B cell (primary cell): ENCODE measurements at regions of chr9 and their contacts with region 1.

Region 1: DNA sequence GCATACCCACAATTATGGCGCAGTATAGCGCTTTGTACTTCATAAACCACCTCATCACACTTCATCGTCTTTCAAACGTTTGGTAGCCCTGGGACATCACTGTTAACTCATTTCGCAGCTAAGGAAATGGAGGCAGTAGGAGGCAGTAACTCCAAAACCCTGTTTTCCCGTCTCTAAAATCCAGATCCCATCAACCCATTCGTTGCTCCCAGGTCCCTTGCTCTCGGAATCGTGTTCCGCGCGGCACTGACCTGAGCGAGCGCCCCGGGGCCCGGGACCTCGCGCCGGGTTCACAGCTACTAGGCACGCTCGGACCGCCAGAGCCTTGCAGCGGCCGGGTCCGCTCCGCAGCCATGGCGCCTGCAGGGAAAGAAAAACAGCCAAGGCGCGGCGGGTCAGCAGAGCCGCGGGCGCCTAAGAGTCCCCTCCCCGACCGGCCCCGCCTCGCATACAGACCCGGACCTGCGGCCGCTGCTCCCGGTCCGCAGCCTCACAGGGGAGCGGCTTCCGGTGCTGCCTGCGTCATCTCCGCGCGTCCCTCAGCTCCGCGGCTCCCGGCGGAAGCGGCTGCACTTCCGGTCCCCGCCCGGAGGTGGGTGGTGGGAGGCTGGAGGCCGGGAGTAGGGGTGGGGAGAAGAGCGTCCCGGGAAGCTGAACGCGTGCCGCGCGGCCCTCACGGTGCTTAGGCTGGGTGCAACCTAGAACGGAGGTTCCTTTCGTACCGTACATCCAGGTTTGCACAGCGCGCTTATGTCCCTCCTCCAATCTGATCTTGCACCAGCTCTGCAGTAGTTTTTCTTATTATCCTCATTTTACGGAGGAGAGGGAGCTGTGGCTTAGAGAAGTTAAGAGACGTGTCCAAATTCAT is at the start of gene FBXW2:
- DNase-seq: peak; percentile 88
- ATAC-seq: peak; percentile 94
- H3K4me3 ChIP-seq: peak within 1 kb of the TSS; percentile 73 to 96 (median 89)
- H3K4me3 Mint-ChIP-seq: peak within 1 kb of the TSS; percentile 92
- H3K27ac ChIP-seq: peak within 1 kb of the TSS; percentile 77 to 87
- H3K27ac Mint-ChIP-seq: peak within 1 kb of the TSS; percentile 92
- H3K4me1 ChIP-seq: peaks cover 18 to 25% of the 10 kb centered on the region in 2 donors
- H3K4me1 Mint-ChIP-seq: peaks cover 38% of the 10 kb centered on the region
- H3K27me3 ChIP-seq: no peaks in the 10 kb centered on the region
- H3K27me3 Mint-ChIP-seq: no peaks in the 10 kb centered on the region
- CTCF ChIP-seq: no peak
- total RNA-seq, gene FBXW2: 70.6 and 73.3 TPM in 2 replicates

Region 2: GRCh38 chr9:120436983-120437475 is 356.1 kb before region 1 on chr9:
- CTCF ChIA-PET with region 1: no interaction called
- POLR2A ChIA-PET with region 1: no interaction called
- intact Hi-C with region 1: no loop called
- DNase-seq: no peak
- ATAC-seq: no peak
- H3K4me3 ChIP-seq: no peak overlapping the region
- H3K4me3 Mint-ChIP-seq: no peak overlapping the region
- H3K27ac ChIP-seq: no peak overlapping the region
- H3K27ac Mint-ChIP-seq: no peak overlapping the region
- H3K4me1 ChIP-seq: peaks cover 0 to under 1% of the 10 kb centered on the region in 2 donors
- H3K4me1 Mint-ChIP-seq: peaks cover 4% of the 10 kb centered on the region
- H3K27me3 ChIP-seq: no peaks in the 10 kb centered on the region
- H3K27me3 Mint-ChIP-seq: no peaks in the 10 kb centered on the region
- CTCF ChIP-seq: no peak

Region 3: GRCh38 chr9:120676767-120677402 is 116.2 kb before region 1 on chr9:
- CTCF ChIA-PET with region 1: no interaction called
- POLR2A ChIA-PET with region 1: no interaction called
- intact Hi-C with region 1: no loop called
- DNase-seq: no peak
- ATAC-seq: no peak
- H3K4me3 ChIP-seq: no peak overlapping the region
- H3K4me3 Mint-ChIP-seq: no peak overlapping the region
- H3K27ac ChIP-seq: no peak overlapping the region
- H3K27ac Mint-ChIP-seq: no peak overlapping the region
- H3K4me1 ChIP-seq: no peaks in the 10 kb centered on the region
- H3K4me1 Mint-ChIP-seq: peaks cover 3% of the 10 kb centered on the region
- H3K27me3 ChIP-seq: no peaks in the 10 kb centered on the region
- H3K27me3 Mint-ChIP-seq: no peaks in the 10 kb centered on the region
- CTCF ChIP-seq: no peak

Region 4: DNA sequence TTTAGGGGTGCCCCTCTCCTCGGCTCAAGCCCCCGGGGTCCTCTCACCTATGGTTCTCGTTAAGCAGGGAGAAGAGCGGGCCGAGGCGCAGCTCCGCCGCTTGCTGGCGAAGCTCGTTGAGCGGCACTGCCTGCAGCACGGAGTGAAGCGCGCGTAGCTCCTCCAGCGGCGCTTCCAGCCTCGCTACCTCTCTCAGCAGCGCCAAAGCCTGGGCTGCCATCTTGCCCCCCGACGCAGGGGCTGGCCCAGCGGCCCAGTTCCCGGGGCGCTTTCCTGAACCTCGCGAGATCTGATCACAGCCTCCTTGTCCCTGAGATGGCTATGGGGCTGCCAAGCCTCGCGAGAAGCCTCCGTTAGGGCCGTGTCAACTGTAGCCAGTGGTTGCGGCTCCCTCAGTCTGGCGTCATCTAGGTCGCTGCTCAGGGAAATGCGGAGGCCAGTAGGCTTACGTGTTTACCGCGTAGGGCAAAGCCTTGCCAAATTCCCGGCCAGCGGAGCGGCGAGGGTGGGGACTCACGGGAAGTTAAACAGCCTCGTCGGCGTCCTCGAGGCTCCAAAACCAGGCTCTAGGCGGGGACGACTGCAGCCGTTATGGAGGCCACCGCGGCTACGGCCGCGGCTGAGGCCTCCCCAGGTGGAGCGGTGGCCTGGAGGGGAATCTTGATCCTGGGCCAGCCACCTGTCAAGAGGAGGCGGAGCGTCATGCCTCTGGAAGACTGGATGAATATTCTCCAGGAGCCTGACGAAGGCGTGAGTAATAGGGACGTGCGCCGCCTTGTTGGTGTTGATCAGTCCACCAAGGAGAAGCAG is 49.8 kb after region 1 on chr9 and contains the start of gene PSMD5:
- CTCF ChIA-PET with region 1: no interaction called
- POLR2A ChIA-PET with region 1: interaction called, 5 read pairs
- intact Hi-C with region 1: loop called (anchors 1 kb)
- DNase-seq: peak; percentile 96
- ATAC-seq: peak; percentile 98
- H3K4me3 ChIP-seq: peak within 1 kb of the TSS; percentile 68 to 99 (median 82)
- H3K4me3 Mint-ChIP-seq: peak within 1 kb of the TSS; percentile 90
- H3K27ac ChIP-seq: peak within 1 kb of the TSS; percentile 89
- H3K27ac Mint-ChIP-seq: peak within 1 kb of the TSS; percentile 95
- H3K4me1 ChIP-seq: peaks cover 21 to 23% of the 10 kb centered on the region in 2 donors
- H3K4me1 Mint-ChIP-seq: peaks cover 27% of the 10 kb centered on the region
- H3K27me3 ChIP-seq: no peaks in the 10 kb centered on the region
- H3K27me3 Mint-ChIP-seq: no peaks in the 10 kb centered on the region
- CTCF ChIP-seq: no peak
- total RNA-seq, gene PSMD5: 25.3 and 26.8 TPM in 2 replicates